Activated T-helper 1 cell treated with anti-CD3 and anti-CD28 coated beads, Interleukin-12 subunit alpha, Interleukin-12 subunit beta, Interleukin-2, Interleukin-4 antibody, amounts not matched to agents 30 ng/mL and 10 ng/mL and 1 ng/mL, durations not matched to agents 14 hours and 24 hours and 36 hours (primary cell): ENCODE measurements at regions of chr4 and their contacts with region 1.

Region 1: GRCh38 chr4:184538023-184538599 is 63.8 kb upstream of the IRF2 start:
- DNase-seq: peak; percentile 55
- H3K4me3 Mint-ChIP-seq: peak overlapping the region; percentile 91
- H3K27ac Mint-ChIP-seq: peak overlapping the region; percentile 94
- H3K4me1 Mint-ChIP-seq: peaks cover 64% of the 10 kb centered on the region
- H3K27me3 Mint-ChIP-seq: no peaks in the 10 kb centered on the region

Region 2: DNA sequence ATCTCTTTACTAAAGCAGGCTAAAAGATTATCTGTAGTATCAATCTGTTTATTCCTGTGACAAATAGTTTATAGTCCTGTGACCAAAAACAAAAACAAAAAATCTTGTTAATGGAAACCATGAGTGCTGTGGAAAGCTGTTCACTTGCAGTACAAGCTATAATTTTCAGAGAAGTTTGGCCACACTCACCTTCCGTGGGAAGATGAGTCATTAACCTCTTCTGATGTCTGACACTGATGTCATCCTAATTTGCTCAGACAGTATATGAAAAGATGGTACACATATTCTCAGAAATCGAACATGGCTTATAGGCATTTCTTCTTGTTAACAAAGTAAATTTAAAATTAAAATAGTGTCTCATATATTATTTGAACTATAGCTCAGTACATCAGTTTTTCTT is 300.5 kb before region 1 on chr4:
- intact Hi-C with region 1: loop called (anchors 1 kb)
- DNase-seq: peak; percentile 62
- H3K4me3 Mint-ChIP-seq: peak overlapping the region; percentile 70
- H3K27ac Mint-ChIP-seq: peak overlapping the region; percentile 97
- H3K4me1 Mint-ChIP-seq: peaks cover 59% of the 10 kb centered on the region
- H3K27me3 Mint-ChIP-seq: no peaks in the 10 kb centered on the region

Region 3: GRCh38 chr4:184250795-184251669 is 287.1 kb before region 1 on chr4:
- intact Hi-C with region 1: no loop called
- DNase-seq: no peak
- H3K4me3 Mint-ChIP-seq: peak overlapping the region; percentile 27
- H3K27ac Mint-ChIP-seq: peak overlapping the region; percentile 94
- H3K4me1 Mint-ChIP-seq: peaks cover 38% of the 10 kb centered on the region
- H3K27me3 Mint-ChIP-seq: peaks cover 1% of the 10 kb centered on the region

Region 4: GRCh38 chr4:184318852-184319251 is 219.3 kb before region 1 on chr4:
- intact Hi-C with region 1: loop called (anchors 1 kb)
- DNase-seq: no peak
- H3K4me3 Mint-ChIP-seq: peak overlapping the region; percentile 23
- H3K27ac Mint-ChIP-seq: peak overlapping the region; percentile 89
- H3K4me1 Mint-ChIP-seq: peaks cover 71% of the 10 kb centered on the region
- H3K27me3 Mint-ChIP-seq: no peaks in the 10 kb centered on the region

Region 5: GRCh38 chr4:184459413-184459812 is 78.7 kb before region 1 on chr4:
- intact Hi-C with region 1: loop called (anchors 1 kb)
- DNase-seq: no peak
- H3K4me3 Mint-ChIP-seq: peak overlapping the region; percentile 35
- H3K27ac Mint-ChIP-seq: peak overlapping the region; percentile 83
- H3K4me1 Mint-ChIP-seq: peaks cover 82% of the 10 kb centered on the region
- H3K27me3 Mint-ChIP-seq: no peaks in the 10 kb centered on the region

Region 6: GRCh38 chr4:184575306-184575705 is 37.2 kb after region 1 on chr4:
- intact Hi-C with region 1: loop called (anchors 1 kb)
- DNase-seq: no peak
- H3K4me3 Mint-ChIP-seq: no peak overlapping the region
- H3K27ac Mint-ChIP-seq: peak overlapping the region; percentile 55
- H3K4me1 Mint-ChIP-seq: peaks cover 19% of the 10 kb centered on the region
- H3K27me3 Mint-ChIP-seq: no peaks in the 10 kb centered on the region

Region 7: GRCh38 chr4:185203486-185204237 is 665.6 kb after region 1 on chr4 and contains the start of gene CFAP97:
- intact Hi-C with region 1: loop called (anchors 10 kb)
- DNase-seq: peak; percentile 75
- H3K4me3 Mint-ChIP-seq: peak within 1 kb of the TSS; percentile 99
- H3K27ac Mint-ChIP-seq: peak within 1 kb of the TSS; percentile 100
- H3K4me1 Mint-ChIP-seq: peaks cover 36% of the 10 kb centered on the region
- H3K27me3 Mint-ChIP-seq: peaks cover 1% of the 10 kb centered on the region
- total RNA-seq, gene CFAP97: 52.4 and 54.6 TPM in 2 replicates